OCI-LY7 (cell line): ENCODE measurements at regions of chr12 and their contacts with region 1.

Region 1: GRCh38 chr12:88572781-88573565 is 7.3 kb downstream of the KITLG start:
- DNase-seq: no peak
- H3K4me3 ChIP-seq: no peak overlapping the region
- H3K27ac ChIP-seq: no peak overlapping the region
- H3K4me1 ChIP-seq: no peaks in the 10 kb centered on the region
- CTCF ChIP-seq: no peak

Region 2: GRCh38 chr12:88604646-88605045 is 31.7 kb after region 1 on chr12:
- CTCF ChIA-PET with region 1: no interaction called
- POLR2A ChIA-PET with region 1: no interaction called
- intact Hi-C with region 1: loop called (anchors 2 kb)
- DNase-seq: no peak
- H3K4me3 ChIP-seq: no peak overlapping the region
- H3K27ac ChIP-seq: no peak overlapping the region
- H3K4me1 ChIP-seq: no peaks in the 10 kb centered on the region
- CTCF ChIP-seq: no peak

Region 3: DNA sequence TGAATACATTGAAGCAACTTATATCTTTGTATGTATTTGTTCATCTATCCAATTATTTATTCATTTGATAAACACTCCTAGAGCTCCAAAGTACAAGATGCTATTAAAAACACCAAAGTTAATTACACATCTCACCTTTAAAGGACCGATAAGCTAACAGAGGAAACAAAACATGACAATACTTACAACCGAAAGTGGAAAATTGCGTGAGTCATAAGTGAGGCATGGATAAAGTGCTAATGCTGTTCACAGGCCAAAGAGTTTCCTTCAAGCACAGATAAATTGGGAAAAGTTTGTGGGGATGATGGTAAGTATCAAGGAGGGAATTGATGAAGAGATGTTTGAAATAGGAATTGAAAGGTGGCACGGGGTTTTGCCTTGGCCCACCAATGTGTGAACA is 180.1 kb after region 1 on chr12:
- CTCF ChIA-PET with region 1: no interaction called
- POLR2A ChIA-PET with region 1: no interaction called
- intact Hi-C with region 1: no loop called
- DNase-seq: no peak
- H3K4me3 ChIP-seq: no peak overlapping the region
- H3K27ac ChIP-seq: no peak overlapping the region
- H3K4me1 ChIP-seq: no peaks in the 10 kb centered on the region
- CTCF ChIP-seq: no peak